Right cardiac atrium (tissue), 5 donors: ENCODE measurements at regions of chr16 and their contacts with region 1.

Region 1: DNA sequence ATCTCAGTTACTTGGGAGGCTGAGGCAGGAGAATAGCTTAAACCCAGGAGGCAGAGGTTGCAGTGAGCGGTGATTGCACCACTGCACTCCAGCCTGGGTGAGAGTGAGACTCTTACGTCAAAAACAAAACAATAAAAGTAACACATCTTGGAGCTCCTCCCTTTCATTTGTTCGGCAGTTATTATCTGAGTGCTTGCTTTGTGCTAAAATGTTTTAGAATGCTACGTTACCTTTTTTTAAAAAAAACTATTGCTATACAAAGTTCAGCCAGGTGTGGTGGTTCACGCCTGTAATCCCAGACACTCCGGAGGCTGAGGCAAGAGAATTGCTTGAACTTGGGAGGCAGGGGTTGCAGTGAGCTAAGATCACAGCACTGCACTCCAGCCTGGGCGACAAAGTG is 15.8 kb downstream of the IST1 start:
- DNase-seq: no peak
- ATAC-seq: no peak
- H3K4me3 ChIP-seq: no peak overlapping the region
- H3K27ac ChIP-seq: no peak overlapping the region
- H3K4me1 ChIP-seq: peaks cover 20% of the 10 kb centered on the region
- H3K27me3 ChIP-seq: no peaks in the 10 kb centered on the region

Region 2: GRCh38 chr16:71927383-71927782 is 16.3 kb after region 1 on chr16:
- intact Hi-C with region 1: loop called in 1 of 4 experiments (anchors 2 kb)
- DNase-seq: peak in 2 of 3 donors; percentile 71 to 74
- ATAC-seq: peak; percentile 72 to 75
- H3K4me3 ChIP-seq: no peak overlapping the region
- H3K27ac ChIP-seq: peak overlapping the region; percentile 95
- H3K4me1 ChIP-seq: peaks cover 18% of the 10 kb centered on the region
- H3K27me3 ChIP-seq: no peaks in the 10 kb centered on the region

Region 3: DNA sequence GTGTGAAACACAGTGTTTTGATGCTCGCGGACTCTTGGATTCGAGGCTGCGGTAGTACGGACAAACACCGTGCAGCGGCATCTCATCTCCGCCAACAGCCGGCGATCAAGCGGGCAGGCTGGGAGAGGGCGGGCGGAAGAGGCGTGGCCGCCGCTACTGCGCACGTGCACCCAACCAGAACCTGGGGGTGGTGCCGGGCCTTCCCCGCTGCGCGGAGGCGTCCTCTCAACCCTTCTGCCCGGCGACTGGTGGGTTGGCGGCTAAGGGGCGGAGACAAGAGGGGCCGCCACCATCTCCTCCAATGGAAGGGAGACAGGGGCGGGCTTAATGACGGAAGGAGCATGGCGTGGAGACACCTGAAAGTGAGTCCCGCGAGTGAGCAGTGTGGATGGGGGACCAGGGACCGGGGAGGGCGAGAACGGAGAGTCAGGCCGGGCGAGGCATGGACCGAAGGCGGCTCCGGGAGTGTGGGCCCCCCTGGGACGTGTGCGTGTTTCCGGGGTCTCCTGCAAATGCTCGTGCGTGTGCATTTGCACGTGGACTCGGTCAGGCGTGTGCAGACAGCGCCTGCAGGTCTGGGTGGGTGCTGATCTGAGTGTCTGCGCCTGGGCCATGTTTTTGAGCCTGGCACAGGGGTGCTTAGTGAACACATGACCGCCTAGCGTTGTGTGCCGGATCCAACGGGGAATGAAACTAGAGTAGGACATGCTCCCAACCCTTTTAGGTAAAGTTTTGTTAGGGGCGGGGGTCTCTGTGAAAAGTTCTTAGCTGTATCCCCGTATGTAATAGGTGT is 97.5 kb after region 1 on chr16 and contains the start of gene DHODH:
- intact Hi-C with region 1: no loop called
- DNase-seq: peak; percentile 99
- ATAC-seq: peak; percentile 100
- H3K4me3 ChIP-seq: peak within 1 kb of the TSS; percentile 77
- H3K27ac ChIP-seq: peak within 1 kb of the TSS; percentile 26
- H3K4me1 ChIP-seq: no peaks in the 10 kb centered on the region
- H3K27me3 ChIP-seq: no peaks in the 10 kb centered on the region
- total RNA-seq, gene DHODH: 44.1 to 55.7 (median 47.4) TPM

Region 4: DNA sequence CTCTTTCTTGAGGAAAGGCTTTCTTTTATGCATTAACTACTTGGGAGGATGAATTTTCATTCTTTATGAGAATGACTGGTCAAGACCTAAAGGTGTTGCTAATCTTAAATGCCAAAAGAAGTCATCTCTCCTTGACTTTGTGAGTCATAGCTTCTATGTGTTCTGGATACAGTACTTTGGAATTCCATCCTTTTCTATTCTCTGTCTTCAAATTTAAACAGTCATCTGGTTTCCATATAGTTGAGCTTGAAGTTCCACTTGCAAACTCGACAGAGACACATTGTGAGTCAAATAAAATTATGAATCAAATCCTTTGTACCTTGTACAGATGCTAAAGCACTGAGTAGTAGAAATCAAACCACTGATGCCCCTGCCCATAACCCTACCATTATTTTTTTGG is 532.7 kb after region 1 on chr16:
- intact Hi-C with region 1: no loop called
- DNase-seq: no peak
- ATAC-seq: no peak
- H3K4me3 ChIP-seq: no peak overlapping the region
- H3K27ac ChIP-seq: no peak overlapping the region
- H3K4me1 ChIP-seq: no peaks in the 10 kb centered on the region
- H3K27me3 ChIP-seq: no peaks in the 10 kb centered on the region